ENCODE measurements at regions of chr17 and their contacts with region 1.

Region 1: DNA sequence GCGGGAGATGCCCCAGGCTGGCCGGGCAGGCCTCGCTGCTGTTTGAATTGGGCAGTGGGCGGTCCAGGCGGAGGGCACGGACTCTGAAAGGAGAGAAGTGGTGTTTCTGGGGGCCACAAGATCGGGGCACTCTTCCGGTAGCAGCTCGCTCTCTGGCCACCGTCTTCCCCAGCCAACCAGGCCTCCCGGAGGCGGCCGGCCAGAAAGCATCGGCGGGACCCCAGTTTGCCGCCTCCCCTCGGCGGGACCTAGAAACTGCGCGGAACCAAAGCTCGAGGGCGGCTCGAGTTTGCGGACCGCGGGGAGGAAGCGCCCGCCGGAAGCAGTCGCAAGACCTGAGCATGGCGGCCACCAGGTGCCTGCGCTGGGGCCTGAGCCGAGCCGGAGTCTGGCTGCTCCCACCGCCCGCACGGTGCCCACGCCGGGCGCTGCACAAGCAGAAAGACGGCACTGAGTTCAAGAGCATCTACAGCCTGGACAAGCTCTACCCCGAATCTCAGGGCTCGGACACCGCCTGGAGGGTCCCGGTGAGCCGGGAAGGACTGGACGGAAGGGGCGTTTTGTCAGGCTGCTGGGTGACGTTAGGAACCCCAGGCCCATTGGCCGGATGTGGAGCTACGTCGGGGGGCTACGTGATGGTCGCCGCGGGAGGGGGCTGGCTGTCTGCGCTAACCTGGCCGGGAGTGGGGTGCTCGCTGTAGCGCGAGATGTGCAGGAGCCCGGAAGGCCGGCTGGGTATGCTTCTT is at the start of gene MRPL58:
- DNase-seq: peak; percentile 90

Region 2: GRCh38 chr17:74862108-74862964 is 150.2 kb before region 1 on chr17:
- CTCF ChIA-PET with region 1: no interaction called
- POLR2A ChIA-PET with region 1: no interaction called
- DNase-seq: peak; percentile 75

Region 3: DNA sequence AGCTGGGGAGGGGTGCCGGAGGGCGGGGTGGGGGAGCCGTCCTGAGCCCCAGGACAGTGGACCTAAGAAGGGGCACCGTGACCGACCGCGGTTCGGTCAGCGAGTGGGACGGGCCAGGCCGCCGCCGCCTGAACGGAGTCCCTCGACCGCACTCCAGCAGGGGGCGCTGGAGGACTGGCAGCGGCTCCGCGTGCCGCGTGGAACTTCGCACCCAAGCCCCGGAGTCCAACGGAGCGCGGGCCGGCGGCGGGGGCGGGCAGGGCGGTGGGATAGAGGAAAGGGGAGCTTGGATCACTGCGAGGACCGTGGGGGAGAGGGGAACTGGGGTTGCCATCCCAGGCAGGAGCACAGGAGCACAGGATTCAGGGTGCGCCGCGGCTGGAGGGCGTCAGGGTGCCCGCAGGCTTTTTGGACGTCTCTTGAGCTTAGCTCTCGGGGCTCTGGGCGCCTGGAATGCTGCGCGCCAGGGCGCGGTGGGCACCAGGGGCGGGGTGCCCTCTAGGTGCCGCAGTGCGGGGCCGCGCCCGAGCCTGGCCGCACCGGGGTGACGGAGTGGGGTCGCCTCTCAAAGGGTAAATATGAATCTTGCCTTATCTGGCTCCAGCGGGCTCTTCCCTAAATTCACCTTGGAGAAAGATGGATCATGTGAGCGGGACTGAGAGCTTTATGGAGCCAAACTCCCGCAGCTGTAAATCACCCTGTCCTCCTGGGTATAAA is 88.8 kb before region 1 on chr17:
- CTCF ChIA-PET with region 1: no interaction called
- POLR2A ChIA-PET with region 1: interaction called, 10 read pairs
- DNase-seq: peak; percentile 95

Region 4: DNA sequence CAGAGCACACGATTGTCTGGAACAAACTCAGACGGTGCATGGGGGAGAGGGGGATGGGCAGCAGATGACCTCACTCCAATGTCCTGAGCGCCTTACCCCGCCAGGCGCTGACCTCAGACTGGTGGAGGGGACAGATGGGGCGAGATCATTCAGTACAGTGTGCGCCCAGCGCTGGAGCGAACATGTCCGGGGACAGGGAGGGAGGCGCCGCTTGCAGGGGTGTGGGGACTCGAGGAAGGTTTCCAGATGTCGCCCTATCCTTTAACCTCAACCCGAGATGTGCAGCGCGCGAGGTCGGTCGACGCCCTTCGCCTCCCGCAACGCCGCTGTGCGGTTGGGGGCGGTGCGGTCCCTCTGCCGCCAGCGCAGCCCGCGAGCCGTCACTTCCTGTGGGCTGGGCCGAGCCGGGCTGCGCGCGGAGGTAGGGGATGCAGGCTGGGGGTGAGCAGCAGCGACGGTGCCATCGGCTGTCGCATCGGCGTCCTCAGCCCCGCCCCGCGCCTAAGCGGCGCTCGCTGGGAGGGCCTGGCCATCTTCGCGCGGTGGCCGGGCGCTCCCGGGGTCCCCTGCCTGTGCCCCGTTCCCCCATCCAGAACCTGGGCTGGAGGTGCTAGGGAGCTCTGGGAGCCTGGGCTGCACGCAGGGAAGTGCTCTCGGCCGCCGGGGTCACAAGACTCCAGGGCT is 30.4 kb before region 1 on chr17:
- CTCF ChIA-PET with region 1: interaction called, 4 read pairs
- POLR2A ChIA-PET with region 1: interaction called, 169 read pairs
- DNase-seq: peak; percentile 89

Region 5: DNA sequence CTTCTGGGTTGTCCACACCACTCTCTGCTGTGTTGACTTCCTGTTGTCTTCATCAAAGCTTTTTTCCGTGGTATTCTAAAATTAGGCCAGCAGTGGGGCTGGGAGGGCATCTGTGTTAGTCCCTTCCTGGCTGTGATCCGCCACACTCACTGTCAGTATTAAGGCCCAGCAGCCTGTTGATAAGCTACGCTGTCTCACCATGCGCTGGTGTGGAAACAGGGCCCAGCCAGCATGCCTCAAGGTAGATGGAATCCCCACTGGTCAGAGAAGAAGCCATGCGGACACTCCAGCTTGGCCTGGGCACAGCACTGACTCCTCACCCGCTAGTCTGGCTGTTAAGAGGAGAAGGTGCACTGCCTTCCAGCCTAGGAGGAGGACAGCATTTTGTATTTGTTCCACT is 13.7 kb before region 1 on chr17:
- CTCF ChIA-PET with region 1: interaction called, 3 read pairs
- POLR2A ChIA-PET with region 1: interaction called, 169 read pairs
- DNase-seq: no peak

Region 6: GRCh38 chr17:75046582-75047289 is 34.2 kb after region 1 on chr17 and contains the starts of genes ATP5PD and KCTD2:
- CTCF ChIA-PET with region 1: no interaction called
- POLR2A ChIA-PET with region 1: interaction called, 18 read pairs
- DNase-seq: peak; percentile 97

Region 7: GRCh38 chr17:75205037-75205792 is 192.7 kb after region 1 on chr17 and contains the start of gene NUP85:
- CTCF ChIA-PET with region 1: interaction called, 5 read pairs
- POLR2A ChIA-PET with region 1: interaction called, 10 read pairs
- DNase-seq: peak; percentile 99

Measured in HEK293T (cell line).